Activated CD4-positive, alpha-beta T cell treated with anti-CD3 and anti-CD28 coated beads for 36 hours (primary cell): ENCODE measurements at regions of chr9 and their contacts with region 1.

Region 1: DNA sequence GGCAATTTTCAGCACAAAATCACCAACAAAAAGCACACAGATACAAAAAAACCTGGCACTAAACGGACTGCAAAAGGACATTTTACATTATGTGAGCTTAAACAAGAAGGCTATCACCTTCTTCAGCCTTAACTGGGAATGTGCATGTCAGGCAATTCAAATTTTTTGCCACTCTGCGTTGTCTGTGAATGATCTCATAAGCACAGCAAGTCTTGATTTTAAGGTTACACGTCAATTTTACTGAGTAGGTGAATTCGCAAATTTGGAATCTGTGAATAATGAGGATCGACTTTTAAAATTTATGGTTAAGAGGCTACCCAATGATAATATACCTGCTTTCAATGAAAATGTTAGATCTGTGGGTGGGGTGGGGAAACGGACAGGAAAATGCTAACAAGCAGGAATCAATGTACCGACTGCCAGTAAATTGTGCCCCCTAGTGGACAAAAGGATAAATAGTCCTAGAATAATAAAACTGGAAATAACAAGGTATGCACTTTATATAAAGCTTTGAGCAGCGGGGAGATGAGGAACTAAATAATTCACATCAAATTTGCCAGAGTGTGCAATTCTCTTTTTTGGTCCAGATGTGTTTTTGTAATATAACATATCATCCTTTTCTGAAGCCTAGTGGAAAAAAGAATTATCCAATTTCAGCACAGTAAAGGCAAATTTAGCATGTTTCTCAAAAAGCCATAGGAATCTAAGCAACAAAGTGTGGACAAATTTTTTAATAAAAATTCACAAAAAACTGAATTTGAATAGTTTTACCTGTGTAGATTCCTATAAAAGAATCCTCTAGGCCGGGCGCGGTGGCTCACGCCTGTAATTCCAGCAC is 20.5 kb downstream of the EQTN start:
- DNase-seq: peak; percentile 9
- ATAC-seq: no peak
- H3K4me3 Mint-ChIP-seq: no peak overlapping the region
- H3K27ac Mint-ChIP-seq: no peak overlapping the region
- H3K4me1 Mint-ChIP-seq: no peaks in the 10 kb centered on the region
- H3K27me3 Mint-ChIP-seq: peaks cover 2% of the 10 kb centered on the region

Region 2: DNA sequence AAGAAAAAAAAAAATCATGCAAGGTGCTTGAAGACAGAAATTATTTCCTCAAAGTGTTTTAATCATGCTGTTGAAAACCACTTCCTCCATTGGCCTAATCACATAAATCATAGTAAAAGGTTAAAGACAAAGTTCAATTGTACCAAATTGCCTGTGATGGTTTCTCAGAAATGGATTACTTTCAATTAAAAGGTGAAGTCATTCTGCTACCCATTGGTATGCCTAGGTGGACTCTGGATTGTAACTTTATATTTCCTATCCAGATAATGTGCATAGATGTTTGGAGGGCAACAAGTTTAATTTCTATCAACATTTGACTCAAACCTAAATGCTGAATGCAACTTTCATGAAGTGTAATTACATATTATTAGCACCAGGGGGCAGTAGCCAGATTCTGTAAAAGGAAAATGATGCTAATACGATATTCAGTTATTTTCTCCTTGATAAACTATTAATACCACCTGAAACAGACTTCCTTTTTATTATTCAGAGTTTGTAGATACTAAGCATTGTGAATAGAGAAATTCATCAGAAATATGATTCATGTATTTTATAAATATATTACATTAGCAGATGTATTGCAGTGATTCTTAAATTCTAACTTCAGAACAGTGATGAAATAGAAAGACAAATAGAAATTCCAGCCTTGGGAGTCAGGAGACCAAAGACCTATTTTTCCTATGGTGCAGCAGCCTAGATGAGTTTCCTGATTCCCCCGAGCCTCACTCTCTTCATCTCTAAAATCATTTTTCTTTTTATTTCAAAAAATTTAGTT is 532.0 kb before region 1 on chr9:
- CTCF ChIA-PET with region 1: no interaction called
- POLR2A ChIA-PET with region 1: no interaction called
- intact Hi-C with region 1: loop called (anchors 1 to 2 kb)
- DNase-seq: no peak
- ATAC-seq: no peak
- H3K4me3 Mint-ChIP-seq: no peak overlapping the region
- H3K27ac Mint-ChIP-seq: no peak overlapping the region
- H3K4me1 Mint-ChIP-seq: no peaks in the 10 kb centered on the region
- H3K27me3 Mint-ChIP-seq: peaks cover 6% of the 10 kb centered on the region

Region 3: DNA sequence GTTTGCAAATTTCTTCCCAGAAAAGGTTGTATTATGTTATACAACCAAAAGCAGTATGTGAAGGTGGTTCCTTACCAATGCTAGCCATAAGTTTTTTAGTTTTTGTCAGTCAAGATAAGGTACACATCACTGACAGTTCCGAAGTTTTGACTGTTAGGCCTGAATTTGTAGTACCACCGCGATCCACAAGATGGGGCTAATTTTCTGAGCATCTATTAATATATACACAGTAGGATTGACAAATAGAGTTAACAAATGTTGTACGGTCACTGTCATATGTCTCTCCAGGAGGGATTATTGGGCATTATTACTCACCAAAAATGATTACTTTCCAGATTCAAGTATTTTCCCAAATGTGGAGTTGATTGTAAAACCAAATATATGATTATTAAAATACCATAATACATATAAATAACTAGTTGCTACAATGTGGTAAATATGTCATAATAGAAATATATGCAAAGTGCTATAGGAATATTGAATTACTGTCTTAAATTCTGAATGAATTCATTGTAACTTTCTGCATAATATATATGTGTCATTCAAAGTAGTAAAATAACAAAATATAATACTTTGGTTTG is 242.5 kb before region 1 on chr9:
- CTCF ChIA-PET with region 1: interaction called, 4 read pairs
- POLR2A ChIA-PET with region 1: no interaction called
- intact Hi-C with region 1: loop called (anchors 1 kb)
- DNase-seq: peak; percentile 72
- ATAC-seq: peak; percentile 55
- H3K4me3 Mint-ChIP-seq: no peak overlapping the region
- H3K27ac Mint-ChIP-seq: no peak overlapping the region
- H3K4me1 Mint-ChIP-seq: no peaks in the 10 kb centered on the region
- H3K27me3 Mint-ChIP-seq: no peaks in the 10 kb centered on the region

Region 4: GRCh38 chr9:27247756-27248155 is 28.7 kb before region 1 on chr9:
- CTCF ChIA-PET with region 1: no interaction called
- POLR2A ChIA-PET with region 1: no interaction called
- intact Hi-C with region 1: loop called in 1 of 2 experiments (anchors 2 kb)
- DNase-seq: peak; percentile 35
- ATAC-seq: no peak
- H3K4me3 Mint-ChIP-seq: no peak overlapping the region
- H3K27ac Mint-ChIP-seq: no peak overlapping the region
- H3K4me1 Mint-ChIP-seq: no peaks in the 10 kb centered on the region
- H3K27me3 Mint-ChIP-seq: peaks cover 6% of the 10 kb centered on the region